ENCODE measurements at regions of chr12 and their contacts with region 1.

Region 1: DNA sequence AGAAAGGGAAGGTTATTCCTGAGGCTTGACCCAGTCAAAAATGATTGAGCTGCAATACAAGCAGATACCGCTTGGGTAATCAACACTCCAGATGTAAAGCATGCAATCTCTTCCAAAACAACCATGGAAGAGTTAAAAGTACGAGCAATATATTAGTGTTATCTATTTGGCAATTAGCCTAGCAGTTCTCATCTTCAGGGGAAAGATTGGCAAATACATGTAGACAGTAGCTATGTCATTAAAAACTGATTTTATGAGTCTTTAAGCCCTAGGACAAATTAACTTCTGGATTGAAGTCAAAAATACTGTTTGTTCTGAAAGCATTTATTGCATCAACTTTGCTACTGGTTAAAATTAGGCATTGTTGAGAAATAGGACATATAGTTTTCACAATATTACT is 9.3 kb upstream of the GYS2 start:
- DNase-seq: no peak
- H3K4me3 ChIP-seq: no peak overlapping the region
- H3K27ac ChIP-seq: no peak overlapping the region
- H3K4me1 ChIP-seq: peaks cover 0 to 21% (median 6%) of the 10 kb centered on the region in 4 donors
- H3K27me3 ChIP-seq: no peaks in the 10 kb centered on the region
- CTCF ChIP-seq: no peak
- EP300 ChIP-seq: no peak
- POLR2A ChIP-seq: no peak

Region 2: DNA sequence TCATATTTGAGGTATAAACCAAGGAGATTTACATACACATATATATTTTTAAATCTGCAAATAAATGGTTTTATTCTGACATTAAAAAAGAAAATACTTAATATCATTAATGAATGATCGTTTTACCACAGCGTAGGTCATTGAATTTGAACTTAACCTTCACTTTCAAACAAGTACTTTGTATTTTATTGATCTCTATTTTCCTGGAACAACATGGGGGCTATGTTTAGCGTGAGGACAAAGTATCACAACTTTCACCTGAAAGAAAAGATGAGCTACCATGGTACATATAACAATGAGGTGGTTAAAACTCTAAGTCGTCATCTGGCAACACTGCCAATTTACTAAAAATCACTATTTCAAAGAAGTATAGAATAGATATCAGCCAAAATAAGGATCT is 15.3 kb before region 1 on chr12:
- intact Hi-C with region 1: no loop called
- DNase-seq: no peak
- H3K4me3 ChIP-seq: no peak overlapping the region
- H3K27ac ChIP-seq: no peak overlapping the region
- H3K4me1 ChIP-seq: no peaks in the 10 kb centered on the region
- H3K27me3 ChIP-seq: no peaks in the 10 kb centered on the region
- CTCF ChIP-seq: no peak
- EP300 ChIP-seq: no peak
- POLR2A ChIP-seq: no peak

Region 3: DNA sequence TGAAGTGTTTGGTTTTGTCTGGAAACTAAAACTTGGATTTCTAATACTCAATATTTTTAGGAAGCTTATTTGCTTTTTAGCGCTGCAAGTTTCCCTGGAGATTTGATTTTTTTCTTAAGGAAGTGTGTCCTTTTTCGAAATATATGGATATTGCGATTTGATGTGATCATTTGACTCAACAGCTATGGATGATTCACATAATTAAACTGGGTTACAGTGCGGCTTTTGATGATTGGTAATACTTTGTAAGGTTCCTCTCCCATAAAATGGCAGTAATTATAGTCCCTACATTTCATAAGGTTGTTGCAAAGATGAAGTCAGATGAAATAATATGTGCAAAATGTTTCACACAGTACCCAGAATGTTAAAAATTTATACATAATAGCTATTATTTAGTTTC is 30.6 kb after region 1 on chr12:
- intact Hi-C with region 1: no loop called
- DNase-seq: no peak
- H3K4me3 ChIP-seq: no peak overlapping the region
- H3K27ac ChIP-seq: no peak overlapping the region
- H3K4me1 ChIP-seq: peaks cover 0 to 42% (median 19%) of the 10 kb centered on the region in 4 donors
- H3K27me3 ChIP-seq: no peaks in the 10 kb centered on the region
- CTCF ChIP-seq: no peak
- EP300 ChIP-seq: no peak
- POLR2A ChIP-seq: no peak

Region 4: GRCh38 chr12:21677622-21678277 is 63.8 kb after region 1 on chr12:
- intact Hi-C with region 1: loop called (anchors 5 kb)
- DNase-seq: no peak
- H3K4me3 ChIP-seq: no peak overlapping the region
- H3K27ac ChIP-seq: no peak overlapping the region
- H3K4me1 ChIP-seq: peaks cover 0 to 12% (median 5%) of the 10 kb centered on the region in 4 donors
- H3K27me3 ChIP-seq: no peaks in the 10 kb centered on the region
- CTCF ChIP-seq: no peak
- EP300 ChIP-seq: no peak
- POLR2A ChIP-seq: no peak

Region 5: GRCh38 chr12:21906919-21907493 is 293.1 kb after region 1 on chr12:
- intact Hi-C with region 1: no loop called
- DNase-seq: no peak
- H3K4me3 ChIP-seq: no peak overlapping the region
- H3K27ac ChIP-seq: no peak overlapping the region
- H3K4me1 ChIP-seq: no peaks in the 10 kb centered on the region
- H3K27me3 ChIP-seq: no peaks in the 10 kb centered on the region
- CTCF ChIP-seq: no peak
- EP300 ChIP-seq: no peak
- POLR2A ChIP-seq: no peak